HEK293 (cell line): ENCODE measurements at regions of chr2 and their contacts with region 1.

Region 1: GRCh38 chr2:26139269-26140183 is 33.4 kb upstream of the GAREM2 start:
- H3K4me3 ChIP-seq: no peak overlapping the region
- H3K27ac ChIP-seq: no peak overlapping the region
- H3K4me1 ChIP-seq: peaks cover 15% of the 10 kb centered on the region
- CTCF ChIP-seq: no peak

Region 2: DNA sequence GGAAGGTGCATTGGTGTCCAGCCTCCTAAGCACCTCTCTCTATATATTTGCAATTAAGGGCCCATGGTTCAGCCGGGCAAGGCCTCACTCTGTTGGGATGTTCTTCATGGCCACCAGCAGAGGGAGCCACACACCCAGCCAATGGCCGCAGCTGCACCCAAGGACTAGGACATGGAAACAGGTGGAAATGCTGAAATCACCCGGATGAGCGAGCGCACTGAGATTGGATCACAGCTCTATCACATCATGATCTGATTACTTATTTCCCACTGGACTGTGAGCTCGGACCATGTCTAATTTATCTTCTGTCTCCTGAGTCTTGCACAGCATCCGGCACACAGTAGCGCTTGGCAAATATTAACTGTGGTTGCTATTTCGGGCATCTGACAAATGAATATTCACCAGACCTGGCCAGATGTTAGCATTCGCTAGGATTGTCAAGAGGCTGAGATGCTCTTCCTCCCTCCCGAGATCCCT is 188.4 kb before region 1 on chr2:
- CTCF ChIA-PET with region 1: interaction called, 70 read pairs
- POLR2A ChIA-PET with region 1: no interaction called
- H3K4me3 ChIP-seq: no peak overlapping the region
- H3K27ac ChIP-seq: no peak overlapping the region
- H3K4me1 ChIP-seq: no peaks in the 10 kb centered on the region
- CTCF ChIP-seq: peak; percentile 80